ENCODE measurements at regions of chr2 and their contacts with region 1.

Region 1: DNA sequence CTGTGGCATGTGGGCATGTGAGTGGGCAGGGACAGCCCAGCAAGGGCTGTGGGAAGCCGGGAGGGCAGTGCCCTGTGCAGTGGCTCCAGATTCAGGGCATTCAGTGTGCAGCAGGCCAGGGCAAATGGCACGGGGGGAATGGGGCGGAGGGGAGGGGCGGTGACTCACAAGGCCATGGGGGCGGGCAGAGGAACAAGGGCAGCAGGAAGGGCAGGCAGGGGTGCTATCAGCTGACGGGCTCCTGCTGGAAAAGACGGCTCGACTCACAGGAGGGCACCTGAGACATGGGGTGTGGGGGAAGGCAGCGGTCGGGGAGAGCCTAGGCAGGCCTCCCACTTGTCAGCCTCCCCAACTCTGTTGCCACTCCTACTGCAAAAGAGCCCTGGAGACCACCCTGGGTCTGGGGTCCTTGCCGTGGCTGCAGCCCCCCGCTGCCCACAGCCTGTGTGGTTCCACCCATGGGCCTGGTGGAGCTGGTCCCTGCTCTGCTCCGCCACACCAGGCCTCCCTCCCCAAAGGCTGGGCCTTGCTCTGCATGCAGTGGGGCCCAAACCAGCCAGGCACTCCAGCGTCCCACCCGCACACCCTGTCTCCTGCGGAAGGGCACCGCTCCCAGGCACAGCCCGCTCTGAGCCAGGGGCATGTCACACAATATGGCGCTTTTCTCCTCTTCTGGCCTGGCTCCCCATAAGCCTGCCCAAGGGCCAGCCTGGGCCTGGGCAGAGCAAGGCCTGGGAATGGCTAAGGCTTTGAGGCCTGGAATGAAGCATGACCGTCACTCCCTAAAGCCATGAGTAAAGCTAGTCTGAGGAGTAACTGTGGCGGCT is 25.9 kb downstream of the HS6ST1 start:
- DNase-seq: peak in 1 of 2 donors; percentile 39
- ATAC-seq: peak; percentile 19 to 74 (median 58)
- H3K4me3 ChIP-seq: no peak overlapping the region
- H3K27ac ChIP-seq: peak overlapping the region in 5 of 10 donors; percentile 15 to 58 (median 41)
- H3K4me1 ChIP-seq: peaks cover 0 to 55% (median 19%) of the 10 kb centered on the region in 9 donors
- H3K27me3 ChIP-seq: no peaks in the 10 kb centered on the region
- CTCF ChIP-seq: no peak

Region 2: DNA sequence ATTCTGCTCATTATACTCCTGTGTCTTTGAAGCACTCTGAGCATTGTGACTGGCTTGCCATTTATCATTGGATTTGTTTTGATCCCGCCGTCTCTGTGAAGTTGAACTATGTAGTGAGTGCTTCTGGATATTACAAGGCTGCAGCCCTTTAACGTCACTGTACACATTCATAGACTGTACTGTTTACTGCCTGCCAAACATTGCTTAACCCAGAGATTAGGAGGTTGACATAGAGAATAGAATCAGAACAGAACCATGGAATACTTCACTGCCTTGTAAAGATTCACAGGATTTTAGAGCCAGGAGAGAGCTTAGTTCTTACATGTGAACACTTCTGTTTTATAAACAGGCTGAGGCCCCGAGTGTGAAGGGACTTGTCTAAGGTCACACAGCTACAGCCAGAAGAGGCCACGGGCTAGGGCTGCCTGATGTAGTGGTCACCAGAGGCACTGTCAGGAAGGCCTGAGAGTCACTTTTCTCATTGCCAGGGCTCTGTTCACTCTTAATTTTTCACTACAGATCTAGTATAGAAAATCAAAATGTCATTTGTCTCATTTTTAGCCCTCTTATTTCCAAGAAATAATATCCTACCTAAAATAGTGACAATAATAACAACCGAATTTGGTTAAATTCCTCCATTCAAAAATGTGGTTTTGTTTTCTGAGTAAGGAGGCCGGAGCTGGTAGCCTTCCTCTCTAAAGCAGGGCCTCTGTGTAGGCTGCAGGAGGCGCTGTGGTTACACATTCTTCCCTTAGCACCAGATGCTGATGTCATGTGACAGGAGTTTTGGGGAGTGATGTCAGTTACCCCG is 114.0 kb before region 1 on chr2:
- intact Hi-C with region 1: loop called in 1 of 10 experiments (anchors 10 kb)
- DNase-seq: peak; percentile 32 to 70
- ATAC-seq: peak; percentile 76 to 98 (median 94)
- H3K4me3 ChIP-seq: no peak overlapping the region
- H3K27ac ChIP-seq: peak overlapping the region; percentile 52 to 84 (median 68)
- H3K4me1 ChIP-seq: peaks cover 0 to 23% (median 11%) of the 10 kb centered on the region in 9 donors
- H3K27me3 ChIP-seq: no peaks in the 10 kb centered on the region
- CTCF ChIP-seq: peak; percentile 25 to 80 (median 72)

Region 3: GRCh38 chr2:128196471-128196931 is 96.3 kb before region 1 on chr2:
- intact Hi-C with region 1: loop called in 1 of 10 experiments (anchors 10 kb)
- DNase-seq: no peak
- ATAC-seq: peak in 6 of 8 donors; percentile 46 to 86 (median 62)
- H3K4me3 ChIP-seq: no peak overlapping the region
- H3K27ac ChIP-seq: peak overlapping the region in 2 of 10 donors; percentile 13 to 20
- H3K4me1 ChIP-seq: peaks cover 3 to 33% (median 21%) of the 10 kb centered on the region in 9 donors
- H3K27me3 ChIP-seq: no peaks in the 10 kb centered on the region
- CTCF ChIP-seq: peak in 2 of 9 donors; percentile 13 to 21

Measured in heart right ventricle (tissue), 16 donors.